Left cardiac atrium (tissue), 4 donors: ENCODE measurements at regions of chr12 and their contacts with region 1.

Region 1: DNA sequence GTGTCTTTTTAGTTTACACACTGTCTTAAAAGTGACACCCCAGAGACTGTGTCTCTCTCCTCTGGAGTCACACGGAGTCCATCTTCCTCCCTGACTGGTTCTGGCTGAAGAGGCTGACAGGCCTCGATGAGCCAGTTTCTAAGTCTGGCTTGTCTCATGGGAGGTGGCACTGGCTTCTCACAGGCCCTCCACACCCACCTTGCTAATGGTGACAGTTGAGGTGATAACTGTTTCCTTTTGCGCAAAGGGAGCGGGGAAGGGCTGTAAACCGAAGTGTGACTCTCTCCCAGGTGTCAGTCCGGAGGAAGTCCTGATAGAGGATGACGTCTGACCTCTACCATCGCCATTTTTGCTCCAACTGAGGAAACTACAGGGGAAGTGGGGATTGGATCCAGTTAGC is 30.2 kb downstream of the KCTD10 start:
- DNase-seq: peak; percentile 52
- ATAC-seq: peak; percentile 69 to 74

Region 2: GRCh38 chr12:109170324-109170723 is 276.5 kb before region 1 on chr12:
- intact Hi-C with region 1: no loop called
- DNase-seq: no peak
- ATAC-seq: no peak

Region 3: GRCh38 chr12:109462710-109463692 is 16.1 kb after region 1 on chr12:
- intact Hi-C with region 1: loop called in 1 of 2 experiments (anchors 2 kb)
- DNase-seq: peak; percentile 87
- ATAC-seq: peak; percentile 81 to 82

Region 4: GRCh38 chr12:109549613-109550270 is 102.9 kb after region 1 on chr12:
- intact Hi-C with region 1: no loop called
- DNase-seq: peak; percentile 4
- ATAC-seq: no peak